Activated naive CD4-positive, alpha-beta T cell treated with anti-CD3 and anti-CD28 coated beads for 36 hours (primary cell): ENCODE measurements at regions of chr7 and their contacts with region 1.

Region 1: GRCh38 chr7:101602484-101603241 is 26.4 kb downstream of the MYL10 start:
- DNase-seq: peak; percentile 86
- H3K4me3 Mint-ChIP-seq: no peak overlapping the region
- H3K27ac Mint-ChIP-seq: no peak overlapping the region
- H3K4me1 Mint-ChIP-seq: no peaks in the 10 kb centered on the region
- H3K27me3 Mint-ChIP-seq: no peaks in the 10 kb centered on the region

Region 2: GRCh38 chr7:101614939-101615302 is 12.3 kb after region 1 on chr7:
- CTCF ChIA-PET with region 1: interaction called, 20 read pairs
- intact Hi-C with region 1: no loop called
- DNase-seq: no peak
- H3K4me3 Mint-ChIP-seq: no peak overlapping the region
- H3K27ac Mint-ChIP-seq: no peak overlapping the region
- H3K4me1 Mint-ChIP-seq: no peaks in the 10 kb centered on the region
- H3K27me3 Mint-ChIP-seq: no peaks in the 10 kb centered on the region

Region 3: GRCh38 chr7:101688183-101688831 is 85.6 kb after region 1 on chr7:
- CTCF ChIA-PET with region 1: interaction called, 3 read pairs
- intact Hi-C with region 1: loop called (anchors 1 kb)
- DNase-seq: peak; percentile 84
- H3K4me3 Mint-ChIP-seq: no peak overlapping the region
- H3K27ac Mint-ChIP-seq: no peak overlapping the region
- H3K4me1 Mint-ChIP-seq: no peaks in the 10 kb centered on the region
- H3K27me3 Mint-ChIP-seq: no peaks in the 10 kb centered on the region

Region 4: GRCh38 chr7:102236592-102237287 is 634.1 kb after region 1 on chr7:
- CTCF ChIA-PET with region 1: interaction called, 5 read pairs
- intact Hi-C with region 1: loop called (anchors 1 kb)
- DNase-seq: peak; percentile 67
- H3K4me3 Mint-ChIP-seq: no peak overlapping the region
- H3K27ac Mint-ChIP-seq: no peak overlapping the region
- H3K4me1 Mint-ChIP-seq: no peaks in the 10 kb centered on the region
- H3K27me3 Mint-ChIP-seq: no peaks in the 10 kb centered on the region

Region 5: GRCh38 chr7:102272075-102272917 is 669.6 kb after region 1 on chr7:
- CTCF ChIA-PET with region 1: interaction called, 7 read pairs
- intact Hi-C with region 1: loop called (anchors 1 kb)
- DNase-seq: peak; percentile 83
- H3K4me3 Mint-ChIP-seq: no peak overlapping the region
- H3K27ac Mint-ChIP-seq: no peak overlapping the region
- H3K4me1 Mint-ChIP-seq: peaks cover 3% of the 10 kb centered on the region
- H3K27me3 Mint-ChIP-seq: no peaks in the 10 kb centered on the region